Activated B cell treated with CpG ODN at 0.5 μM for 24 hours (primary cell): ENCODE measurements at regions of chr9 and their contacts with region 1.

Region 1: DNA sequence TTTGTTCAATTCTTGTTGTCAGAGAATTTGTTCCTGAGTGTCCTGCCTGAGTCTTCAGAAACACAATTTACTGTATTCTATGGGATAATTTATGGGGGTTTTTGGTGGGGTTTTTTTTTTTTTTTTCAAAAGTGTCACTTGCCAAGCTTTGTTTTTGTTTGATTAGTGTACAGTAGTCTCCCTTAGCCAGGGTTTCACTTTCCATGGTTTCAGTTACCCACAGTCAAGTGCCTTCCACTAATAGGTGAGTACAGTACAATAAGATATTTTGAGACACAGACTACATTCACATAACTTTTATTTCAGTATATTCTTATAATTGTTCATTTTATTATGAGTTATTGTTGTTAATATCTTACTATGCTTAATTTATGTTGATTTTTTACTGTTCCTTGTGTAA is 25.0 kb upstream of the AUH start:
- DNase-seq: no peak
- ATAC-seq: no peak
- H3K4me3 Mint-ChIP-seq: no peak overlapping the region
- H3K27ac Mint-ChIP-seq: no peak overlapping the region
- H3K4me1 Mint-ChIP-seq: no peaks in the 10 kb centered on the region
- H3K27me3 Mint-ChIP-seq: peaks cover 3% of the 10 kb centered on the region
- CTCF ChIP-seq: no peak

Region 2: DNA sequence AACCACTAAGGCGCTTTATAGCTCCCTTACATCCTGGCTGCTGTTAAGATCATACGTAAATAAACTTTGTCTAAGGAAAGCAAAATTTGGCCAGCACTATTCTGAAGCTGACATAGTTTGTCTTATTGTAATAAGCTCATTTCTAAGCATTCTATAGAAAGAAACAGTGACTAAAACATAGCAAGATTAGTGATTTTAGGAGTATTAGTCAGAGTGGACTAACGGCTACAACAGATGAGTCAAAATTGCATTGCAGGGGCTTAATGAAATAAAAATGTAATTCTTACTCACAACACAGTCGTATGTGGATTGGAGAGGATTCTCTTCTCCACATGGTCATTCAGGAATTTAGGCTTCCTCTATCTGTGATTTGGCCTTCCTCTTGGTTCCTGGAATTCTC is 1434.4 kb before region 1 on chr9:
- CTCF ChIA-PET with region 1: no interaction called
- POLR2A ChIA-PET with region 1: interaction called, 11 read pairs
- intact Hi-C with region 1: no loop called
- DNase-seq: no peak
- ATAC-seq: no peak
- H3K4me3 Mint-ChIP-seq: no peak overlapping the region
- H3K27ac Mint-ChIP-seq: no peak overlapping the region
- H3K4me1 Mint-ChIP-seq: no peaks in the 10 kb centered on the region
- H3K27me3 Mint-ChIP-seq: no peaks in the 10 kb centered on the region
- CTCF ChIP-seq: no peak